ENCODE measurements at regions of chr9 and their contacts with region 1.

Region 1: GRCh38 chr9:137029058-137029936 is 1.3 kb upstream of the ABCA2 start:
- DNase-seq: peak; percentile 67 to 73
- ATAC-seq: peak; percentile 63 to 90
- H3K4me3 ChIP-seq: peak overlapping the region; percentile 74; the same call in 1 of the 3 replicates
- H3K27ac ChIP-seq: peak overlapping the region in 1 of 2 experiments; percentile 92; a peak in 4 of 6 replicates
- H3K4me1 ChIP-seq: peaks cover 26% of the 10 kb centered on the region
- CTCF ChIP-seq: peak; percentile 67
- EP300 ChIP-seq: no peak
- POLR2A ChIP-seq: no peak
- RAD21 ChIP-seq: peak in 1 of 2 experiments; percentile 49; a peak in 2 of 5 replicates

Region 2: DNA sequence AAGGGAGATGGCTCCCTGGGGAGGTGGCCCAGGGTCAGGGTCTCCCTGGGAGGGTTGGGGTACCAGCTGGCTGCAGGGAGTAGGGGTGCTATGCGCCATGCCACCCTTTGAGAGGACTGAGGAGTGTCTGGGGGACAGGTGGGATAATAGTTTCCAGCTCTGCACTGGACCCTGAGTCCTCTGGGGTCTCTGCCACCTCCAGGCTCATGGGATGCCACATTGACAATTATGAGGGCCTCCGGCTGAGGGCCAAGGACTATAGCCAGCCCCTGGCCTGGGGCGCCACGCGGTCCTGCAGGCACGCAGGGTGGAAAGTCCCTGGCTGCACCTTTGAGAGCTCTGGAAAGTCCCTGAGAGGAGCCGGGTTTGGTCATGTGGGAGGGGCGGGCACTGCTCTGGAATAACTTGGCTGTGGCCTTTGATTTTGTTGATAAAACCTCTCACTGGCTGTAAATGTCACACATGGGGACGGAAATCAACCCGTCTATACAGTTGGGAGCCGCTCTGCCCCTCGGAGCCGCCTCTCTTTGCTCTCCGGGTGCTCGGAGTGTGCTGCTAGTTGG is 127.0 kb before region 1 on chr9:
- CTCF ChIA-PET with region 1: interaction called, 10 read pairs
- POLR2A ChIA-PET with region 1: no interaction called
- DNase-seq: peak; percentile 94 to 97
- ATAC-seq: peak; percentile 65 to 79
- H3K4me3 ChIP-seq: peak overlapping the region; percentile 21
- H3K27ac ChIP-seq: peak overlapping the region; percentile 96
- H3K4me1 ChIP-seq: peaks cover 73% of the 10 kb centered on the region
- CTCF ChIP-seq: no peak
- EP300 ChIP-seq: peak; percentile 47 to 80; a peak in 3 of 5 replicates
- POLR2A ChIP-seq: peak; percentile 9; the same call in 1 of the 2 replicates
- RAD21 ChIP-seq: 0 out of 5 replicates have a peak, but pooled peaks of 1 of the 2 experiments have one; percentile 9

Region 3: DNA sequence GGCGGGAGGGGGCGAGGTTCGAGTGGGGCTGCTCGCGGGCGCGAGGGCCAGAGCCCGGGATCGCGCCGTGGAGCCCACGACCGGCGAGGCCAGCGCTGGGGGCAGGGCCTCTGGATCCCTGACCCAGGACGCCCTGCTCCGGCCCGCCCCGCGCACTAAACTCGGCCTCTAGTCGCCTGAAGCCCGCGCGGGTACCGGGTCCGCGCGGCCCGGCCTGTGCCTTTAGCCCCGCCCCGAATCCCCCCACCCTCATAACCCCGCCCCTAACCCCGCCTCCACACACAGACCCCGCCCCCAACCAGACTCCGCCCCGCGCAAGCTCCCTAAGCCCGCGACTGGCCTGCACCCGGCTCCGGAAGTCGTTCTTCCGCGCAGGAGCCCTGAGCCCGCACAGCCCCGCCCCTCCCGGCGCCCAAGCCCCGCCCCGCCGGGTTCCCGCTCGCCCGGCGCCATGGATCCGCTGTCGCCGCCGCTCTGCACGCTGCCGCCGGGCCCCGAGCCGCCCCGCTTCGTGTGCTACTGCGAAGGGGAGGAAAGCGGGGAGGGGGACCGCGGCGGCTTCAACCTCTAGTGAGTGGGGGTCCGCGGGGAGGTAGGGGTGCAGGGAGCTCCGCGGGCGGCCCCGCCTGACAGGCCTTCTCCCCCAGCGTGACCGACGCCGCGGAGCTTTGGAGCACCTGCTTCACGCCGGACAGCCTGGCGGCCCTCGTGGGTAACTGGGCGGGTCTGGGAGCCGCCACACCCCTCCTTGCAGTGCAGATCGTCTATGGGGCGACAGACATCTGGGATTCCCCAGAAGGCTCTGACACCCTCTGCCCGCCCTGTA is 37.1 kb before region 1 on chr9 and contains the start of gene PAXX:
- CTCF ChIA-PET with region 1: interaction called, 34 read pairs
- POLR2A ChIA-PET with region 1: interaction called, 8 read pairs
- DNase-seq: peak; percentile 88 to 94
- ATAC-seq: peak; percentile 74 to 82
- H3K4me3 ChIP-seq: peak within 1 kb of the TSS; percentile 89
- H3K27ac ChIP-seq: peak within 1 kb of the TSS; percentile 91 to 97
- H3K4me1 ChIP-seq: peaks cover 45% of the 10 kb centered on the region
- CTCF ChIP-seq: no peak
- EP300 ChIP-seq: no peak
- POLR2A ChIP-seq: peak; percentile 65
- RAD21 ChIP-seq: no peak
- polyA plus RNA-seq, gene PAXX: 12.6 and 15.6 TPM in 2 replicates

Region 4: GRCh38 chr9:137012694-137013584 is 16.4 kb before region 1 on chr9:
- CTCF ChIA-PET with region 1: interaction called, 169 read pairs
- POLR2A ChIA-PET with region 1: no interaction called
- DNase-seq: no peak
- ATAC-seq: 0 out of 6 replicates have a peak, but pooled peaks of 1 of the 2 experiments have one; percentile 9
- H3K4me3 ChIP-seq: no peak overlapping the region
- H3K27ac ChIP-seq: no peak overlapping the region
- H3K4me1 ChIP-seq: no peaks in the 10 kb centered on the region
- CTCF ChIP-seq: no peak
- EP300 ChIP-seq: no peak
- POLR2A ChIP-seq: no peak
- RAD21 ChIP-seq: no peak

Region 5: DNA sequence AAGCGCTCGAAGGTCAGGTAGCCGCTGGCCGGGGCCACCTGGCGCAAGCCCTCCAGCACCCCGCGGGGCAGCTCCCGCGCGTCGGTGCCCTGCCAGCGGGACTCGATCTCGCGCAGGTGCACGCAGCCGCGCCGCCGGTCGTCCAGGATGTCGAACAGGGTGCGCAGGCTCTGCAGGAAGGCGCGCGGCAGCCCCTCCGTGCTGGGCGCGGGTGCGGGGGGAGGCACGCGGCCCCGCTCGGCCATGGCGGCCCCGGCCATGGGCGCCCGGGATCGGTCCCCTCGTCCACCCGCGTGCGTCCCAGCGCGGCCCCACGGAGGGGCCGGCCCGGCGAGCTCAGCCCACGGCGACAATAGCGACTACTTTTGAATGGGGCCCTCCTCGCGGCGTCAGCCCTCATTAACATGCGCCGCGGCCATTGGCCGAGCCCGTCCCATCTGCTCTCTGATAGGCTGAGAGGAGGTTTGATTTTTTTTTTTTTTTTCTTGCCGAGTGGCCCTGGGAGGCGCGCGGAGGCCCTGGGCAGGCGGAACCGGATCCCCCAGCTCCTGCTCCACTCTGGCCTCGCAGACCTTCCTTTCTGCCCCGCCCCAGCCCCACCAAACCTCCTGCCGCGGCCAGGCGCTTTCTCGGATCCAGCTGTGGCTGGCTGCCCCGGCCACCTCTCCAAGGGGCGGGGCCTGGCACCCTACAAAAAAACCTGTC is 41.1 kb after region 1 on chr9 and contains the start of gene SAPCD2:
- CTCF ChIA-PET with region 1: interaction called, 207 read pairs
- POLR2A ChIA-PET with region 1: no interaction called
- DNase-seq: peak; percentile 86 to 88
- ATAC-seq: peak; percentile 73 to 89
- H3K4me3 ChIP-seq: peak within 1 kb of the TSS; percentile 52
- H3K27ac ChIP-seq: peak within 1 kb of the TSS; percentile 68 to 88
- H3K4me1 ChIP-seq: peaks cover 27% of the 10 kb centered on the region
- CTCF ChIP-seq: no peak; the same call in 2 of the 3 replicates
- EP300 ChIP-seq: no peak
- POLR2A ChIP-seq: peak; percentile 29; the same call in 1 of the 2 replicates
- RAD21 ChIP-seq: no peak
- polyA plus RNA-seq, gene SAPCD2: 6.5 and 6.9 TPM in 2 replicates

Measured in A549 (cell line).